CD14-positive monocyte (primary cell): ENCODE measurements at regions of chr7 and their contacts with region 1.

Region 1: DNA sequence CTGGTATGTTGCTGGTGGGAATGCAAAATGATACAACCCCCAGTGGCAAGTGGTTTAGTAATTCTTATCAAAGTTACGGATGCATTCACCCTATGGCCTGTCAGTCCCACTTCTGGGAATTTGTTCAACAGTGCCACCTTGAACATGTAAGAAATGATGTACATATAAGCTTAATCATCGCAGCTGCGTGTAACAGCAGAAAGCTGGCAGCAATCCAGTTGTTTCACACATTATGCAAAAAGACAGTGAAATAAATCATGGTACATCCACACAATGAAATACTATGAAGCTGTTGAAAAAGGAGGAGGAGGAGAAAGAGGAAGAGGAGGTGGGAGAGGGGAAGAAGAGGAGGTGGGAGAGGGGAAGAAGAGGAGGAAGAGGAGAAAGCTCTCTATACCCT is 76.2 kb upstream of the MYL10 start:
- DNase-seq: peak in 1 of 3 donors; percentile 54
- H3K4me3 ChIP-seq: no peak overlapping the region
- H3K4me3 Mint-ChIP-seq: no peak overlapping the region
- H3K27ac ChIP-seq: no peak overlapping the region
- H3K27ac Mint-ChIP-seq: peak overlapping the region in 1 of 7 donors; percentile 5
- H3K4me1 ChIP-seq: peaks cover 0 to 3% of the 10 kb centered on the region in 2 donors
- H3K4me1 Mint-ChIP-seq: peaks cover 6% of the 10 kb centered on the region
- H3K27me3 ChIP-seq: no peaks in the 10 kb centered on the region
- H3K27me3 Mint-ChIP-seq: peaks cover 1 to 9% (median 2%) of the 10 kb centered on the region in 3 donors
- CTCF ChIP-seq: no peak

Region 2: DNA sequence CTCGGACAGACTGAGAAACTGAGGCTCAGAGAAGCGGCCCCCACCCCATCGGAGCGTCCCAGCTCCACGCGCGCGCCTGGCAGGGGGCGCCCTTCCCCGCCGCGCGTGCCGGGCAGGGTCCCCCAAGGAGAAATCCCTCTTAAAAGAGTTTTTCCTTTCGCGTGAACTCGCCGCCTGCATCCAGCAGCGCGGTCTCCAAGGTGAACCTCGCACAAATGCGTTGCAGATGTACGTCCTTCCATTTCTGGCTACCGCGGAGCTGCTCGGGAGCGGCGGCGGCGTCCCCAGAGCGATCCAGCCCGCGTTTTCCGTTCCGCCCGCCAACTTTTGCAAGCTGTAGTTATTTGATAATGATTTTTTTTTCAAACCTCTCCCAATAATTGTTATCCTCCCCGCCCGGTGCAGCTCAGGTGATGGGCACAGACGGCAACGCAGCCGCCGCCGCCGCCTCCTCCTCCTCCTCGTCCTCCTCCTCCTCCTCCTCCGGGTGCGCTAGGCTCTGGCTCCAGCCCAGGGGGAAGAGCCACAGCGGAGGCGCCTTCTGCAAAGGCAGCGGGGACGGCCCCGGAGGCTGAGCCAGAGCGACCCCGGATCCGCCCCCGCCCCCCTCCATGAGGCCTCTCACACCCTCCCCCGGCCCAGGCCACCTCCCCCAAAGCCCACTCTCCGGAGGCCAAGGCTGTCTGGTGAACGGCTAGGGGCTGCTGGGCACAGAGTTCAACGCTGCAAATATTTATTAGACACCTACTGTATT is 38.1 kb after region 1 on chr7:
- intact Hi-C with region 1: loop called in 1 of 2 experiments (anchors 5 kb)
- DNase-seq: peak; percentile 37 to 41 (median 39)
- H3K4me3 ChIP-seq: peak overlapping the region; percentile 58 to 77 (median 67)
- H3K4me3 Mint-ChIP-seq: peak overlapping the region; percentile 90 to 95
- H3K27ac ChIP-seq: peak overlapping the region in 1 of 2 donors; percentile 37
- H3K27ac Mint-ChIP-seq: peak overlapping the region in 6 of 7 donors; percentile 53 to 85 (median 80)
- H3K4me1 ChIP-seq: peaks cover 56 to 72% of the 10 kb centered on the region in 2 donors
- H3K4me1 Mint-ChIP-seq: peaks cover 60% of the 10 kb centered on the region
- H3K27me3 ChIP-seq: no peaks in the 10 kb centered on the region
- H3K27me3 Mint-ChIP-seq: peaks cover 0 to 6% (median 0%) of the 10 kb centered on the region in 3 donors
- CTCF ChIP-seq: peak; percentile 75

Region 3: DNA sequence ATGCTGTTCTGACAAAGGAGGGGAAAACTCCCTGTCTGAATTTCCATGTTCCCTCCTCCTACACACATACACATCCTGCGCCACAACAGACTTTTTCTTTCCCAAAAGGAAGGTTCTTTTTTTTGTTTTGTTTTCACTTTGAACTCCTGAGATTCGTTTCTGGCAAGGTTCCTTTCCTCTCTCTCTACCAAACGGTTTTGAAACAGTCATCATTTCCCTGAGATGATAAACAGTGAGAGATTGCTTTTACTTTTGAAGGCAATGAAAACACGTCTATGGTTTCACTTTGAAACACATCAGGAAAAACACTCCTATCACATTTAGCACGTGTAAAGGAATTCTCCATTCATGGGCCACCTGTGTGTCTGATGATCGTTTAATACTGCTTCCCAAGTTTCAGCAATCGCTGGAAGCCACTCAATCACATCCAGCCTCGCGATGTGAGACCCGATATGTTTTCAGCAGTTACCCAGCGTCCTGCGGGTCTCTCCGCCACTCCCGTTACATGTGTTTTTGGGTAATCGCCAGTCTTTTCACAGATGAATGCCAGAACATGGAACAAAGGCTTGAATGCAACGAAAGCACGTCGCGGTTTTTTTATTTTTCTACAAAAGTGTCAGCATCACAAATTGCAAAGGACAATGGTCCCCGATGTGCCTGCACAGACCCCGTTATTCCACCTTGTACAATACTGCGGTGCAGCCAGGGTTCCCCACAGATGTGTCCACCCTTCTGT is 49.3 kb after region 1 on chr7:
- intact Hi-C with region 1: loop called in 1 of 2 experiments (anchors 5 kb)
- DNase-seq: peak in 1 of 3 donors; percentile 11
- H3K4me3 ChIP-seq: peak overlapping the region; percentile 53 to 93 (median 76)
- H3K4me3 Mint-ChIP-seq: peak overlapping the region; percentile 86 to 99
- H3K27ac ChIP-seq: peak overlapping the region in 1 of 2 donors; percentile 75
- H3K27ac Mint-ChIP-seq: peak overlapping the region; percentile 5 to 91 (median 83)
- H3K4me1 ChIP-seq: peaks cover 7 to 8% of the 10 kb centered on the region in 2 donors
- H3K4me1 Mint-ChIP-seq: peaks cover 16% of the 10 kb centered on the region
- H3K27me3 ChIP-seq: no peaks in the 10 kb centered on the region
- H3K27me3 Mint-ChIP-seq: peaks cover 0 to 4% (median 0%) of the 10 kb centered on the region in 3 donors
- CTCF ChIP-seq: no peak